ENCODE measurements at regions of chr10 and their contacts with region 1.

Region 1: DNA sequence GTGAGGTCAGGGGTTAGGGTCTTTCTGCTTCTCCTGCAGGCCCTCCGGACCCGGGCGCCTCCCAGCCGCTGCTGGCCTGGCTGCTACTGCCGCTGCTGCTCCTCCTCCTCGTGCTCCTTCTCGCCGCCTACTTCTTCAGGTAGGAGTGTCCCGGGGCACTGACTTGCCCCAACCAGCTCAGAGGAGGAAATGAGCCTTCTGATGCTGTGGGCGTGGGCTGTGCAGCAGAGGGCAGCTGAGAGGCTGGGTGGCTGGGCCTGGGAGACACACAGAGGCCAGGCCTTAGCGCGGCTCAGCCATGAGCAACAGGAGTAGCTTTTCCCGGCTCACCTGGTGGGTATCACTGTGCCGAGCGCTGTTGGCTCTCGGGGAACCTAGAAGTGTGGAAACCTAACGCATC is 78.9 kb downstream of the MKI67 start:
- DNase-seq: peak; percentile 96
- H3K4me3 Mint-ChIP-seq: peak overlapping the region; percentile 78
- H3K27ac Mint-ChIP-seq: peak overlapping the region; percentile 91
- H3K4me1 Mint-ChIP-seq: peaks cover 21% of the 10 kb centered on the region
- H3K27me3 Mint-ChIP-seq: no peaks in the 10 kb centered on the region
- CTCF ChIP-seq: no peak

Region 2: DNA sequence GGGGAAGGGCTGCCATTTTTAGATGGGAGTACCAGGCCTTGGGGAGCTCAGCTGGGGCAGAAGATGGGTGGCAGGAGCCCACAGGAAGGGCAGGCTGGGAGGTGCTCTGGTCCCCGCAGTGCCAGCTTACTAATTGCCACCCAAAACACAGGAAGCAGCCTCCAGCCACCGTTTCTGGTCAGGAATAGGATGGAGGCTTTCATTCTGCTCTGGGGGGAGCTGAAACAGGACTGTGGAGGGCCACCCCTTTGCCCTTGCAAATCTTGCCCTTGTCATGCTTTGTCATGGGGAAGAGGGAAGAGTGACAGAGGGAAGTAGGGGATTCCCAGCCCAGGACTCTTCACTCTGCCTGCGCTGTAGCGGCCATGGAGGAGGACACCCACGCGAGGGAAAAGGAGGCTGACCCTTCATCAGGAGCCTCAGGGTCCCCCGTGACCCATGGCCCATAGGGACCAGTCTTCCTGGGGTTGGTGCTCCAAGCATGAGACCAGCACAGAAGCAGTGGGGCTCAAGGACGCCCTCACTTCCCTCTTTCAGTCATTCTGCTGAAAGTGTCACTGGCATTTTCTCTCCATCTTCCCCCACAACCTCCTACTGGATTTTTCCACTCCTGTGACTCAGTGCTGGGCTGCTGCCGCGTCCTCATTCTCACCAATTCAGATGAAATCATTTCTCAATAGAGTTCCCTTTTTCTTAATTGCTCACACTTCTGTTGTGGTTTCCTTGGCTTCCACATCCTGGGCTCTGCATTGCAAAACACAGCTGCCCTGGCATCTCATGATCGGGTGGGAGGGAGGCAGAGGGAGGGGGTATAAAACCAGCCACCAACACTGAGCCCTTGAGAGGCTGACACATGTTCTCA is 17.0 kb after region 1 on chr10:
- CTCF ChIA-PET with region 1: interaction called, 50 read pairs
- POLR2A ChIA-PET with region 1: interaction called, 216 read pairs
- intact Hi-C with region 1: loop called (anchors 1 kb)
- DNase-seq: peak; percentile 97
- H3K4me3 Mint-ChIP-seq: peak overlapping the region; percentile 57
- H3K27ac Mint-ChIP-seq: peak overlapping the region; percentile 95
- H3K4me1 Mint-ChIP-seq: peaks cover 31% of the 10 kb centered on the region
- H3K27me3 Mint-ChIP-seq: no peaks in the 10 kb centered on the region
- CTCF ChIP-seq: no peak

Region 3: DNA sequence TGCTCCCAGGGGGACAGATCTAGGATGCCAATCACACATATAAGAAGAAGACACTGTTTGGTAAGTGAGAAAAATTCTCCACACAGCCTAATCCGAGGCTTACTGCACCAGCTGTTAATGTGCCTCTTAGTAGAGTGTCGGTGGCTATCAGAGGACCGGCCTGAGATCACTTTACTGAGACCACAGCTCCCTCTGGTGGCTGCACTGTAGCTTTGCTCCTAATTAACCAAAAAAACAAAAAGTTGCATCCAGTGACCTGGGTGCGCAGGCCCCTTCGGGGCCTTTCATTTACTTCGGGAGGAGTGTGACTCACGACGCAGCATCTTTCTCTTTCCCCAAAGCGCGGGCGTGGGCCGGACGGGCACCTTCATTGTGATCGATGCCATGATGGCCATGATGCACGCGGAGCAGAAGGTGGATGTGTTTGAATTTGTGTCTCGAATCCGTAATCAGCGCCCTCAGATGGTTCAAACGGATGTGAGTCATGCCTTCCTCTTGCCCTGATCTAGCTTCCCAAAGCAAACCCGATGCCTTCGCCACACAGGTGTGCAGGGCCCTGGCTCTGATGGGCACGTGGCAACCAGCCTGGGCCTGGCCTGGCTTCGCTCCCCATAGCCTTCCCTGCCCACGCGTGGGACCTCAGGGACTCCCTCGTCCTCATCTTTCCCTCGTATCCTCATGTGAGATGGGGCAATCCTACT is 22.1 kb after region 1 on chr10:
- CTCF ChIA-PET with region 1: interaction called, 50 read pairs
- POLR2A ChIA-PET with region 1: interaction called, 216 read pairs
- intact Hi-C with region 1: loop called (anchors 1 kb)
- DNase-seq: peak; percentile 79
- H3K4me3 Mint-ChIP-seq: no peak overlapping the region
- H3K27ac Mint-ChIP-seq: peak overlapping the region; percentile 70
- H3K4me1 Mint-ChIP-seq: peaks cover 25% of the 10 kb centered on the region
- H3K27me3 Mint-ChIP-seq: no peaks in the 10 kb centered on the region
- CTCF ChIP-seq: peak; percentile 85

Region 4: DNA sequence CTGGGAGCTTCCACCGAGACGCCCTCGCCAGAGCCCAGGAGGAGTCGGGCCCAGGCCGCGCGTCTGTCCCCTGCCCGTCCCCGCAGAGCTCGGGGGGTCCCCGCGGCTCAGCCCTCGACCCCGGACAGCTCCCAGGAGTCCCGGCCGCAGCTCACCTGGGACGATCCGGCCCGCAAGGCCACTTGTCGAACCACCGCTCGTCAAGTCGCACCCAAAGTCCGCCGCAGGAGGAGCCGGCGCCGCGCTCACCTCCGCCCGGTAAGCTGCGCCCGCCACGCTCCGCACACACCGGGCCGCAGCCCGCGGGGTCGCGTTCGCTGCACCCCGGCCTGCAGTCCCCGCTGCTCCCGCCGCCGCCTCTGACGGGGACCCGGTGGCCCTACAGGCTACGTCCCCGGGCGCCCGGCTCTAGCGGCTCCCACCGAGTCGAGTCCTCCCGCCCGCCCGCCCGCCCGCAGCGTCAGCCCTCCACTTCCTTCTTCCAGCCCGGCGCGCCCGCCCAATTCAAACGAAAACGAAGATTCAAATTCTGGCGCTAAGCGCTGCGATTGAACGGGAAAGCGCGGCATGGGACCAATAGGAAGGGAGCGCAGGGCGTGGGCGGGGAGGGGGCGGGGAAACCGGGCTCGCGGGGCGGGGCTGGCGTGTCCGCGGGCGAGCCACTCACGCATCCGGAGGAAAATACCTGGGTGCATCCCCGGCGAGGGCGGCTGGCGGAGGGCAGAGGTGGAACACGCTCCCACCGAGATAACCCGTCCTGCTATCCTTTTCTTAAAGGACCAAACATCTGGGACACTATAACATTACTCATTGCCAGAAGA is 78.8 kb after region 1 on chr10 and contains the start of gene MKI67:
- CTCF ChIA-PET with region 1: interaction called, 3 read pairs
- POLR2A ChIA-PET with region 1: interaction called, 19 read pairs
- intact Hi-C with region 1: no loop called
- DNase-seq: peak; percentile 96
- H3K4me3 Mint-ChIP-seq: peak within 1 kb of the TSS; percentile 76
- H3K27ac Mint-ChIP-seq: peak within 1 kb of the TSS; percentile 87
- H3K4me1 Mint-ChIP-seq: peaks cover 32% of the 10 kb centered on the region
- H3K27me3 Mint-ChIP-seq: no peaks in the 10 kb centered on the region
- CTCF ChIP-seq: no peak
- total RNA-seq, gene MKI67: 40.4 and 81.4 TPM in 2 replicates

Region 5: GRCh38 chr10:128507066-128507465 is 459.7 kb after region 1 on chr10:
- CTCF ChIA-PET with region 1: no interaction called
- POLR2A ChIA-PET with region 1: no interaction called
- intact Hi-C with region 1: no loop called
- DNase-seq: no peak
- H3K4me3 Mint-ChIP-seq: no peak overlapping the region
- H3K27ac Mint-ChIP-seq: no peak overlapping the region
- H3K4me1 Mint-ChIP-seq: no peaks in the 10 kb centered on the region
- H3K27me3 Mint-ChIP-seq: no peaks in the 10 kb centered on the region
- CTCF ChIP-seq: no peak

Measured in MCF 10A (cell line).